Activated CD8-positive, alpha-beta T cell treated with anti-CD3 and anti-CD28 coated beads for 36 hours (primary cell): ENCODE measurements at regions of chr2 and their contacts with region 1.

Region 1: GRCh38 chr2:96116879-96117697 is 717 bp upstream of the ADRA2B start:
- DNase-seq: peak; percentile 64
- ATAC-seq: peak; percentile 82
- H3K4me3 Mint-ChIP-seq: peak overlapping the region; percentile 64
- H3K27ac Mint-ChIP-seq: no peak overlapping the region
- H3K4me1 Mint-ChIP-seq: peaks cover 22% of the 10 kb centered on the region
- H3K27me3 Mint-ChIP-seq: peaks cover 32% of the 10 kb centered on the region
- CTCF ChIP-seq: peak; percentile 92

Region 2: GRCh38 chr2:96074156-96074555 is 42.9 kb before region 1 on chr2:
- CTCF ChIA-PET with region 1: interaction called, 17 read pairs
- POLR2A ChIA-PET with region 1: no interaction called
- intact Hi-C with region 1: no loop called
- DNase-seq: no peak
- ATAC-seq: no peak
- H3K4me3 Mint-ChIP-seq: no peak overlapping the region
- H3K27ac Mint-ChIP-seq: no peak overlapping the region
- H3K4me1 Mint-ChIP-seq: no peaks in the 10 kb centered on the region
- H3K27me3 Mint-ChIP-seq: no peaks in the 10 kb centered on the region
- CTCF ChIP-seq: no peak

Region 3: DNA sequence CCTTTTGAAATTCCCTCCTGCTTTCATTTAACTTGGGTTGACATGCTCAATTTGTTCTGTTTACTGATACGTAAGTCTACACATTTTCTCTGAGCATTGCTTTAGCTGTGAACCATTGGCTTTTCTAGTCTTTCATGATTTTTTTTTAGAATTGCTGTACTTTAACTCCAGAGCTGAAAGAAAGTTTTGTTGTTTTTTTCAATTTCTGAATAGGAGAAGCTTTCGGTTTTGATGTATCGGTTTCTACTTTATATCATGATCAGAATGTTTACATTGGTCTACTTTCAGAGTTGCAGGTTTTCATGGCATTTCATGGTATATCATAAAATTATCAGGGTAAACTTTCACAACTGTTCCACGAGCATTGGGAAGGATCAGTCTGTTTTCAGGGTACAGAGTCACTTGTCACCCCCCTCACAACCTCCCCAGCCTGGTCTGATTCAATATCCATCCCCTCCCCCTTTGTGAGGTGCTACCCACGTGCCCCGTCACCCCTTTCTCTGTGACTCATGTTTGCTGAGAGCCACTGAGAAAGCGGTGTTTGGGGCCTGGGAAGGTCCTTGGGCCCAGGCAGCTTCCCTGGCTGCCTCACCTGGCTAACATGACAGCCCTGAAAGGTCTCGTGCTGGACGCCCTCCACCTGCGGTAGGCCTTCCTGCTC is 14.2 kb after region 1 on chr2:
- CTCF ChIA-PET with region 1: interaction called, 39 read pairs
- POLR2A ChIA-PET with region 1: interaction called, 5 read pairs
- intact Hi-C with region 1: no loop called
- DNase-seq: peak; percentile 72
- ATAC-seq: peak; percentile 74
- H3K4me3 Mint-ChIP-seq: peak overlapping the region; percentile 28
- H3K27ac Mint-ChIP-seq: peak overlapping the region; percentile 90
- H3K4me1 Mint-ChIP-seq: peaks cover 23% of the 10 kb centered on the region
- H3K27me3 Mint-ChIP-seq: no peaks in the 10 kb centered on the region
- CTCF ChIP-seq: no peak

Region 4: GRCh38 chr2:96145036-96145847 is 28.2 kb after region 1 on chr2 and contains the start of gene DUSP2:
- CTCF ChIA-PET with region 1: interaction called, 39 read pairs
- POLR2A ChIA-PET with region 1: interaction called, 11 read pairs
- intact Hi-C with region 1: no loop called
- DNase-seq: peak; percentile 96
- ATAC-seq: peak; percentile 47
- H3K4me3 Mint-ChIP-seq: peak within 1 kb of the TSS; percentile 98
- H3K27ac Mint-ChIP-seq: peak within 1 kb of the TSS; percentile 98
- H3K4me1 Mint-ChIP-seq: peaks cover 53% of the 10 kb centered on the region
- H3K27me3 Mint-ChIP-seq: no peaks in the 10 kb centered on the region
- CTCF ChIP-seq: no peak
- total RNA-seq, gene DUSP2: 311 to 313 TPM

Region 5: DNA sequence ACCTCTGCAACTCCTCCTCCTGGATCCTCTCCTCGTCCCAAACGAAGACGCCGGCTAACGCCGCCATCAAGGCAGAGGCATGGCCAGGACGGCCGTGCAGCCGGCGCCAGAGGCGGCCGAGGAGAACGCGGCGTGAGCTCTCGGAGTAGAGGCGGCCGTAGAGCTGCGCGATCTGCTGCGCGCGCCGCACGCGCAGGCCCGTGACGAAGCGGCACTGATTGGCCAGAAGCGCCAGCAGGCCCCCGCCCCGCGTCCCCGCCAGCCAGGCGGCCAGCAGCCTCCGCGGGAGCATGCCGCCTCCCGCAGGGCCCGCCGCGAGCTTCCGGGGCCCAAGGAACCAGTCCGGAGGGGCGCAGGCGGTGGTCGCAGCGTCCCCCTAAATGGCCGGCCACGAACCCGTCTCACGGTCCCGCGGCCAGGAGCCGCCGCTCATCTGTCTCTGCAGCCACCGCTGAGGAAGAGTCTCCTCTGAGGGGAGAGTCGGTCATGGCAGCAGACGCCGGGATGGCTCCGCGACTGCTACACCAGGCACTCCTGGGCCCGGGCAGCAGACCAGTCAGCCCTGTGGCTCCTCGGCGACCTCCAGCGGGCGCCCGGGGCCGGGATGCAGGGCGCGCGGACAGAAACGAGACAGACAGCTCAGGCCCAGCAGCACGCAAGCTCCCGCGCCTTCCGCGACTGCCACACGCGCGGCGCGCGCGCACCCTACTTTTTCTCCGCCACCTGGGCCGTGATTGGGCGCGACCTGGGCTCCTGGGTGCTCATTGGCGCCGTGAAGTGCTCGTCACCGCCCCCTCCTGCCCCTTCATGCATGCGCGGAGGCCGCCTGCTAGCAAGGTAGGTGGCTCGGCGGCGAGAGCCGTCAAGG is 91.3 kb after region 1 on chr2 and contains the start of gene STARD7:
- CTCF ChIA-PET with region 1: interaction called, 11 read pairs
- POLR2A ChIA-PET with region 1: no interaction called
- intact Hi-C with region 1: no loop called
- DNase-seq: peak; percentile 99
- ATAC-seq: peak; percentile 93
- H3K4me3 Mint-ChIP-seq: peak within 1 kb of the TSS; percentile 89
- H3K27ac Mint-ChIP-seq: peak within 1 kb of the TSS; percentile 91
- H3K4me1 Mint-ChIP-seq: peaks cover 45% of the 10 kb centered on the region
- H3K27me3 Mint-ChIP-seq: no peaks in the 10 kb centered on the region
- CTCF ChIP-seq: no peak
- total RNA-seq, gene STARD7: 145 to 149 TPM

Region 6: DNA sequence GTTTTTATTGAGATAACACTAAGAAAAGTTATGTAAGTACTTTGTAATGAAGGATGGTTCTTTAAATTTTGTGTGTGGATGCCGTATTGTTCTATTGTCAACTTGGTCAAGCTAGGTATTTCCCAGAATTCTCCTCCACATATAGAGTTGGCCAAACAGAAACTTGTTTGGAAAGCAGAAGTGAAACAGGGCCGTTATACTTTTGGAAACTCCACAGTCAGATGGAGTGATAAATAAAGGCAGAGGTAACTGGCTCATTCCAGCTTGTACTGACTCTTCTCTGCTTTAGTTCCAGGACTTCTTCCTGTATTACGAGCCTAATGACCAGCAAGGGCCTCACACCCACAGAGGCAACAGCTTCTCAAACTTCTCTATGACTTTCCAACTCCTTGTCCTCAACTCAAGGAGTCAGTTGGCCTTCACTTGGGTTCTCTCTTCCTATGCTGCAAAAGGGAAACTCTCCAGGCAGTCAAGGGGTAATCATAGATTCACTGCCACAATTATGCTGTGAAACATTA is 108.0 kb after region 1 on chr2:
- CTCF ChIA-PET with region 1: no interaction called
- POLR2A ChIA-PET with region 1: no interaction called
- intact Hi-C with region 1: no loop called
- DNase-seq: no peak
- ATAC-seq: no peak
- H3K4me3 Mint-ChIP-seq: no peak overlapping the region
- H3K27ac Mint-ChIP-seq: peak overlapping the region; percentile 56
- H3K4me1 Mint-ChIP-seq: peaks cover 11% of the 10 kb centered on the region
- H3K27me3 Mint-ChIP-seq: no peaks in the 10 kb centered on the region
- CTCF ChIP-seq: no peak